Posterior vena cava (tissue), 2 donors: ENCODE measurements at regions of chr3 and their contacts with region 1.

Region 1: DNA sequence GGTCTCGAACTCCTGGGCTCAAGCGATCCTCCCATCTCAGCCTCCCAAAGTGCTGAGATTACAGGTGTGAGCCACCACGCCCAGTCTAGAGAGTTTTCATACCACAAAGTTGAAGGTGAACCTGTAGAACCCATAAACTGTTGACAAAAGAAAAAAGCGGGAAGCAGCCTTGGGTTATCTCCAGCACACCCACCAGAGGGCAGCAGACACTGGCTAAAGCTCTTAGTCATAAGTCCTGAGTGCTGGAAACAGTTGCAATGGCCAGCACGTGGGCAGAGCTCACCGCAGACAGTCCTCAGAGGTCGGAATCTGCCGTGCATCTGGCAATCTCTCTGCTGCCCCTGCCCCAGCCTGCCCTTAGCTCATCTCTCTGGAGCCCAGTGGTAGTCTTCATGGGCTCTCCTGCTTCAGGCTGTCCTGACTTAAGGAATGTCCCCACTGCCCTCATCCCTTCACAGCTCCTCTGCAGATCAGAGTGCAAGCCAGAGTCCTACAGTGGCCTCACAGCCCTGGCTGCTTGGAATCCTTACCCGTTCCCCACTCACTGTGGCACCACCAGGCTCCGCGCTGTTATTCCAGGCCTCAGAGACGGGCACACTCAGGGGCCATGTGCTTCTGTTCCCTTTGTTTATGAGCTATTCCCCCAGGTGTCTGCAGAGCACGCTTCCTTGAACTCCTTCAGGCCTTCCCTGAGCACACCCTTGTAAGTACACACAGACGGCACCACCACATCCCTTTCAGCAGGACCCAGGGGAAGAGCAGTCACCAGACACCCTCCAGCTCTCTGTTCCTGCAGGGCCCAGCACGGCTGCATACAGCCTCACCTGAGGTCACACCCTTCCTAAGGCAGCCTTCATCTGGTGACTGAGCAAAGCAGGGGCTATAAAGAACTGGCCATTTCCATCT is 8.8 kb upstream of the ELP6 start:
- DNase-seq: peak; percentile 92

Region 2: DNA sequence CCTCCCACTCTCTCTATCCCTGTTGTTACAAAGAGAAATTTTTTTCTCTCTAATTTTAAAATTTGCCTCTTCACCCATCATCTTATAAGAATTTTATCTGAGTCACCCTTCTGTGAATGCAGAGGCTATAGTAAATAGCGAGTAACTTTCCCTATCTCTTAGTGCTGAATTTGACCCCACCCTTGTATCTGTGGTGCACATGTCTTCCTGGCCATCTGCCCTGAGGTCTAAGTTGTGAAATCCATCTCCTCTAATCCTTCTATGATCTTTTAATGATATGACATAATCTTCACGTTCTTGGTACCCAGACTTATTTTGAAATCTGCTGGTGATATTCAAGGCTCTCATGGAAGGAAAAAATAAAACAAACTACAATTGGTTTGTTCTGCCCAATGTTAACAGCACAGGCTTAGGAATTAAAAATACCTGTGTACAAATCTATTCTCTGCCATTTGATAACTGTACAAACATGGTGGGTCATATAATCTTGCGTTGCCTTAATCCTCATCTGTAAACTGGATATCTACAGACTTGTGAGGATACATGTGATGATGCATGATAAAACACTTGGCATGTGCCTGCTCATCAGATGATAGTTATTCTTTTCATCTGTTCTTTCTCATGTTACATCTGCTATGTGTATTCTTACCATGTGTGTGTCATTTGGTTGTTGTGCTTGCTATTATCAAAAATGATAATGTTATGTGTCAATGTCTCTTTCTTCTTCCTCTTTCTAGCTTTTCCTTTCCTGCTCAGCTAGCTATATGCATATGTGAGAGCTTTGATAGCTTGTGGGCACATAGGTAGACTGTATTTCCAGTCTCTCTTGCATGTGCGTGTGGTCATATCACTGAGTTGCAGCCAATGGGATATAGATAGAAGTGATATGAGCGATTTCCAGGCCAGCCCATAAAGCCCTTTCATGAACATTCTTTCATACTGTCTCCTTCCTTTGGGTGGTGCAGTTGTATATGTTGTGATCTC is 1293.8 kb before region 1 on chr3:
- intact Hi-C with region 1: no loop called
- DNase-seq: no peak

Region 3: DNA sequence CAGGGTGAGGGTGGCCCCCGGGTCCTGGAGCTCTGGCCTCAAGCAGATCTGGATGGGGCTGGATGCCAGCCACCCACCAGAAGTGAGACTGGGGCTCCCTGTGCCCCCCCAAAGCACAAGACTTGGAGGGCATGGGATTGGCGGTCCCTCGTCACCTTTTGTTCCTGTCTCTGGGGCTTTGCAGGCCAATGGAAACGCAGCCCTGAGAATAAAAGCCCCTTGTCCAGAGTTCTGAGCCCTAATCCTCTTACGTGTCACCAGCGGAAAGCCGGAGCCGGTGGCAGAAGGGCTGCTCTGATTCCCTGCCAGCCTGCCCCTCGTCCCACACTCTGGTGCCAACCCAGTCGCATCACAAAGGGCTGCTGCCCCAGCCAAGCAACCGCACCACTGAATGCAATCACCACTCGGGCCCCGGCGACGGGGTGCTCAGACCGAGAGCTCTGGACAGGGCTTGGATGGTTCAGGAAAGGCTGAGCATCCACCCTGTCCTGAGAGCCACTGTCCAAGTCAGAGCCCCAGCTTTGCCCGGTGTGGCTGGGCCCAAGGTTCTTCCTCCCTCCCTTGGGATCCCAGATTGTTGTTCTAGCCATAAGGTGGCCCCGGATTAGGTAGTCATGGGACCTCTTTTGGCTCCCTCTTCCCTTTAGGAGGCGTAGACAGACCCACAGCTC is 14.0 kb after region 1 on chr3:
- intact Hi-C with region 1: no loop called
- DNase-seq: peak; percentile 79

Region 4: DNA sequence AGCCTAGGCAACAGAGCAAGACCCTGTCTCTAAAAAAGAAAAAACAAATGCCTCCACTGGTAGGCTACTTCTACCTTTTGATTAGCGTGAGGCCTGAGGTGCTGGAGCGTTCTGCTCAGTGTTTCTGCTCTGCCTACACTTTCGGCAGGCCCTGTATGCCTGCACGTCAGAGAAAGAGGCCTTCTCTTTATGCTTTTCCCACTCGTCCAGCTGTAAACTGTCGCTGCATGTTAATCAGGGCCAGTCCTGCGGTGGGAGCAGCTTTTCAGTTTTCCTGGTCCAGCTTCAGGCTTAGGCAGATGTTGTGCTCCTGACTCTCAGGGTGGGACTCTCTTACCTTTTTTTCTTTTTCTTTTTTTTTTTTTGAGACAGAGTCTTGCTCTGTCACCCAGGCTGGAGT is 31.1 kb after region 1 on chr3:
- intact Hi-C with region 1: no loop called
- DNase-seq: no peak

Region 5: DNA sequence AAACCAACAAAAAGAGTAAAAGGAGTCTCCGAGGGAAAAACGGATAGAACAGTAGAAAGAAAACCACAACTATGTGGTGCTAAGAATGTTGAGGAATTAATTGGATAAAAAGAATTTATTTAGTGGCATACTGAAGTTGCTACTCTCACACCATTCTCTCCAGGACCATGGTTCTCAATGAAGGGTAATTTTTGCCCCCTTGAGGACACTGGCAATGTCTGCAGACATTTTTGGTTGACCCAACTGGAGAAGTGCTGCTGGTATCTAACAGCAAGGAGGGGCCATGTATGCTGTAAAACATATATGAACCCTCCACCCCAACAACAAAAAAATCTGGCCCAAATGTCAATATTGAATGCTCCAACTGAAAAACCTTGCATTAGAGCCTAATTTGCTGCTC is 142.2 kb after region 1 on chr3:
- intact Hi-C with region 1: loop called in 1 of 2 experiments (anchors 10 kb)
- DNase-seq: no peak

Region 6: DNA sequence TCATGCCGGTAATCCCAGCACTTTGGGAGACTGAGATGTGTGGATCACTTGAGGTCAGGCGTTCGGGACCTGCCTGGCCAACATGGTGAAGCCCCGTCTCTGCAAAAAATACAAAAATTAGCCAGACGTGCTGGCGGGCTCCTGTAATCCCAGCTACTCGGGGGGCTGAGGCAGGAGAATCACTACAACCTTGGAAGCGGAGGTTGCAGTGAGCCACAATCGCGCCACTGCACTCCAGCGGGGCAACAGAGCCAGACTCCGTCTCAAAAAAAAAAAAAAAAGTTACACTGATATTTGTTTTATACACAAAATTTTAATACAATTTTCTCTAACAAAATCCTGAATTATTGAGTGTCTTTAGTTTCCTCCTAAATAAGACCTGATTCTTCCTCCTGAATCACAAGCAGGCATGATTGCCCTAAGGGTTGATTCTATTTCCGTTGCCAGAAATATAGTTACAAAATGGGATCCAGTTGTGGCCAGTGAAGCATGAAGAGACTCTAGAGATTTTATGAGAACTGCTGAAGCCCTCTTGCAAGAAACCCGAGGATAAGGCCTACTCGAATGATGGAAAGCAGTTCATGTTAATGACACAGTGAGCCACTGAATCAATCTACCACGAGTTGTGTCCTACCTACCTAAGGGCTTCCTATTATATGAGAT is 269.0 kb after region 1 on chr3:
- intact Hi-C with region 1: loop called (anchors 5 kb)
- DNase-seq: peak; percentile 44

Region 7: DNA sequence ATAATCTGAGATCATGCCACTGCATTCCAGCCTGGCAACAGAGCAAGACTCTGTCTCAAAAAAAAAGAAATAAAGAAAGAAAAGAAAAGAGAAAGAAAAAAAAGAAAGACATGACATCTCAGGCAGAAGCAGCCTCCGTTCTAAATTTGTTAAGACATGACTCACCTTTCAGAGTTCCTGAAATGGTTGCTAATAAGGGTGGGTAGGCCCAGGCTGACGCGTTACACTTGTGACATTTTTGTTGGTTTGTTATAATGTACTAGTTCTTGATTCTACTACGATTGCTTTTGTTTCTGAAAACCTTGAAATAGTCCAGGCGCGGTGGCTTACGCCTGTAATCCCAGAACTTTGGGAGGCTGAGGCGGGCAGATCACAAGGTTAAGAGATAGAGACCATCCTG is 1355.3 kb after region 1 on chr3:
- intact Hi-C with region 1: no loop called
- DNase-seq: no peak